Activated CD8-positive, alpha-beta memory T cell treated with anti-CD3 and anti-CD28 coated beads, Interleukin-2, amount 10 ng/mL, durations not matched to agents 7 days and 5 days (primary cell): ENCODE measurements at regions of chr3 and their contacts with region 1.

Region 1: DNA sequence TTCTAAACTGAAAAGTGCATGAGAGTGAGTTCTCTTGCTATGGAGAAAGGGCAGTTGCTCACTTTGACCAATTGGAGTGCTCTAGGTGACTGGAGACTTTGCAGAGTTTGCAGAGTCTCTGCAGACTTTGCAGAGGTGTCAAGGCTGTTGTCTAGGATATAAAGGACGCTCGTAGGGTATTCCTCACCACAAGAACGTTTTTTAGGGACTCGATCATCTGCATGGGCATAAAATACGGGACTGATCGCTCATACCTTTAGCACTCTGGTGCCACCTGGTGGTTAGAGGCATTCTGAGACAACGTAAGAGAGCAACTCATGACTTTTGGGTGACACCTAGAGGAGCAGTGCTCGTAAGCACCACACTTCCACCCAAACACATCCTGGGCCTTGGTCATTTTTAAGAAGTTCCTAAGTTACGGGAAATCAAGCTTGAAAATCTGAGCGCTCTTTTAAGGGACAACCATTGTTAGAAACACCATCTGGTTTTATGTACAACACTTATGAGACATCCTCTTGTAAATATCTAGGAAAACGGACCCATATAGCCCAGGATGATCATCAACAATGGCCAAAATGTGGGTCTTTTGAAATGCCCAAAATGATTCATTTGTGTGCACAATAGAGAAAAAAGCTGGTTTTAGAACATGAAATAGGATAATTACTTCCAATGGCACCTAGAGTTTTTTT is 51.6 kb upstream of the XCR1 start:
- DNase-seq: peak; percentile 94
- ATAC-seq: peak; percentile 98
- H3K4me3 Mint-ChIP-seq: no peak overlapping the region
- H3K27ac Mint-ChIP-seq: peak overlapping the region; percentile 67
- H3K4me1 Mint-ChIP-seq: peaks cover 58% of the 10 kb centered on the region
- H3K27me3 Mint-ChIP-seq: peaks cover 10% of the 10 kb centered on the region

Region 2: DNA sequence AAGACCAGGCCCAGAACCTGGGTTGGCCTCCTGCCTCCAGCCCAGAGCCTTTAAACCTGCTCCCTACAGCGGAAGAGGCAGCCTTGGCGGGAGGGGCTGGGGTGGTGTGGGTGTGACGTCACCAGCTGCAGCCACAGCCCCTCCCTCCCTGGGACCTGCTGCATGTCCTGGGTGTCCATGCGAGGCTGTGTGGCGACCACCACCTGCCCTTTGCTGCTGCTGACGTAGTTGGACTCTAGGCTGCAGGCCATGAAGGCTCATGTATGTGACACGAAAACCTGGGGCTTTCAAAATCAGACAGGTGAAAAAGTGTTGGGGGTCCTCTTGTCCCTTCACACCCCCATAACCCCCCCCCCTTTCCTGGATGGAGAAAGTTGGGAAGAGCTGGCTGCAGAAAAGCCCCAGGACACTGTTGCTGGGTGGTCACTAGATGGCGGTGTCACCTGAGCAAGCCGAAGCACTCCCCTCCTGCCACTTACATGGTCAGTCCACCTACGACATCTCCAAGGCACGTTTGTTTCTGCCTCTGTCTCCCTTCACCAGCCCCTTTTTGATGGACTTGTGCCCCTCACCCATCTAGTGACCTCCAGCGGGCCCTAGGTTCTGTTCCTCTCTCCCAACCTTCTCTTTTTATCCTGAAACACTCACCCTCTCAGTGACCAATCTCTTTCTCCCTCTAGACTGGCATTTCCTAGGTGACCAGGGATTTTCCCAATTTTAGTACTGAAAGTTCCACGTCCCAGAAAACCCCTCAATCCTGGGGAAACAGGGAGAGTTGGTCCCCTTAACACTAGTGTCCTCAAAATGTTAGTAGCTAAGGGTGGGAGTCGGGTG is 317.8 kb before region 1 on chr3:
- CTCF ChIA-PET with region 1: interaction called, 36 read pairs
- DNase-seq: peak; percentile 63
- ATAC-seq: peak; percentile 85
- H3K4me3 Mint-ChIP-seq: no peak overlapping the region
- H3K27ac Mint-ChIP-seq: no peak overlapping the region
- H3K4me1 Mint-ChIP-seq: peaks cover 2% of the 10 kb centered on the region
- H3K27me3 Mint-ChIP-seq: peaks cover 2% of the 10 kb centered on the region

Region 3: DNA sequence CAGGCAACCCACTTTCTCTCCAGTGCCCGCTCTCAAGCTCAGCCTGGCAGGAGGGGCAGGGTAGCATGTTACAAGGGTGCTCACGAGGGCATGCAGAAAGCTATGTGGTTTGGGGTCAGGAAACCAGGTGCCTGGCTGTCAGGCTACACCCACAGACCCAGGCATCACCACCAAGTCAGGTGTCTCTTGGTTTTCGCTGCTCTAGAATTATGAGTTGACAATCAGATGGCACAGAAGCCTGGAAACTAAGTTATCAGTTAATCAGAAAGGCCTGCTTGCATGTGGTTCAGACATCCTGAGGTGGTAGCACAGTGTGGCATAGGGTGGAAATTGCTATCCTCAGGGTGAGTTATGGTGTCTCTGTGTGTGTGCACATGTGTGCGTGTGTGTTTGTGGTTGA is 208.8 kb before region 1 on chr3:
- CTCF ChIA-PET with region 1: no interaction called
- DNase-seq: peak; percentile 79
- ATAC-seq: peak; percentile 73
- H3K4me3 Mint-ChIP-seq: no peak overlapping the region
- H3K27ac Mint-ChIP-seq: peak overlapping the region; percentile 19
- H3K4me1 Mint-ChIP-seq: peaks cover 66% of the 10 kb centered on the region
- H3K27me3 Mint-ChIP-seq: peaks cover 83% of the 10 kb centered on the region

Region 4: DNA sequence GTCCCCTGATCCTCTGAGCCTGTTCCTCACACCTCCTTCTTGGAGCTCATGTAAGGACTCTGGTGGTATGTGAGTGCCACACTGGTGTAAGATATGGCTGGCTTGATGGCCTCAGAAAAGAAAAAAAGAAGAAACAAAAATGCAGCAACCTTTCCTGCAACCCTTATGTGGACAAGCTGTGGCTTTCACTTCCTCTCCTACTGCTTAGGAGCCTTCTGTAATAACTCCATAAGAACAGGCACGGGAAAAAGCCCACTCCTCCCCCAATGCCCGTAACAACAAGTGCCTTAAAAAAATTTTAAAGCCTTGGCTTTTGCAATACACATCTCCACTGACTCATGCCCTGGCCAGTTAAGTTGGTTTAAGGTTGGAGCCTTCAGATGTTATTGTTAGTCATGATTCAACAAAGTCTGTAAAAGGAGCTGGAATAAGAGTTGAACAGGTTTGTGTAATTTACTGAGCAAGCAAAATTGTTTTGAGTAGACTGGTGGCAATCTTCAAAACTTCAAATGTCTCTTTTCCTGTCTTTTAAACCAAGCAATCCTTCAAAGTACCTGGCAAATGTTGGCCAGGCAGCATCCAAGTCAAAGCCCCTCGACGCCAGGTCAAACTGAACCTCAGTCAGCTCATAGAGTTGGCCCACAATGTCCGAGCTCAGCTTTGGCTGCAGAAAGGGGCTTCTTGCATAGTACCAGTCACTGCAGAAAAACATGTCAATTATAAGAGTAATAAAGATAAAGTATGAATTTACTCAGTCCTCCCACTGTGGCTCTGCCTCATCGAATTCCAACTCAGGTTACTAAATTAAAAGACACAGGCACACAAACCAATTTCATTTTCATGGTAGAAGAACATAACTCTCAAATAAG is 106.1 kb before region 1 on chr3:
- CTCF ChIA-PET with region 1: interaction called, 75 read pairs
- DNase-seq: no peak
- ATAC-seq: peak; percentile 40
- H3K4me3 Mint-ChIP-seq: peak overlapping the region; percentile 20
- H3K27ac Mint-ChIP-seq: peak overlapping the region; percentile 87
- H3K4me1 Mint-ChIP-seq: peaks cover 91% of the 10 kb centered on the region
- H3K27me3 Mint-ChIP-seq: no peaks in the 10 kb centered on the region

Region 5: GRCh38 chr3:45995236-45996192 is 83.3 kb before region 1 on chr3 and contains the start of gene FYCO1:
- CTCF ChIA-PET with region 1: interaction called, 38 read pairs
- DNase-seq: peak; percentile 94
- ATAC-seq: peak; percentile 83
- H3K4me3 Mint-ChIP-seq: peak within 1 kb of the TSS; percentile 79
- H3K27ac Mint-ChIP-seq: peak within 1 kb of the TSS; percentile 95
- H3K4me1 Mint-ChIP-seq: peaks cover 50% of the 10 kb centered on the region
- H3K27me3 Mint-ChIP-seq: no peaks in the 10 kb centered on the region
- total RNA-seq, gene FYCO1: 19.1 to 27.7 TPM

Region 6: GRCh38 chr3:46089237-46090011 is 10.6 kb after region 1 on chr3:
- CTCF ChIA-PET with region 1: interaction called, 57 read pairs
- DNase-seq: peak; percentile 76
- ATAC-seq: peak; percentile 71
- H3K4me3 Mint-ChIP-seq: no peak overlapping the region
- H3K27ac Mint-ChIP-seq: peak overlapping the region; percentile 66
- H3K4me1 Mint-ChIP-seq: peaks cover 65% of the 10 kb centered on the region
- H3K27me3 Mint-ChIP-seq: peaks cover 3% of the 10 kb centered on the region

Region 7: GRCh38 chr3:46368569-46368968 is 289.7 kb after region 1 on chr3:
- CTCF ChIA-PET with region 1: interaction called, 58 read pairs
- DNase-seq: peak; percentile 93
- ATAC-seq: peak; percentile 60
- H3K4me3 Mint-ChIP-seq: peak overlapping the region; percentile 82
- H3K27ac Mint-ChIP-seq: peak overlapping the region; percentile 98
- H3K4me1 Mint-ChIP-seq: peaks cover 83% of the 10 kb centered on the region
- H3K27me3 Mint-ChIP-seq: peaks cover 4% of the 10 kb centered on the region